Naive thymus-derived CD4-positive, alpha-beta T cell (primary cell): ENCODE measurements at regions of chr17 and their contacts with region 1.

Region 1: GRCh38 chr17:34420254-34420766 is 57.3 kb upstream of the CCL1 start:
- DNase-seq: peak; percentile 20 to 68 (median 50)
- ATAC-seq: peak; percentile 67
- H3K4me3 ChIP-seq: no peak overlapping the region
- H3K4me3 Mint-ChIP-seq: no peak overlapping the region
- H3K27ac ChIP-seq: no peak overlapping the region
- H3K27ac Mint-ChIP-seq: peak overlapping the region in 1 of 9 donors; percentile 31
- H3K4me1 ChIP-seq: no peaks in the 10 kb centered on the region
- H3K4me1 Mint-ChIP-seq: peaks cover 0 to 8% (median 4%) of the 10 kb centered on the region in 7 donors
- H3K27me3 ChIP-seq: no peaks in the 10 kb centered on the region
- H3K27me3 Mint-ChIP-seq: peaks cover 19 to 58% (median 40%) of the 10 kb centered on the region in 5 donors

Region 2: DNA sequence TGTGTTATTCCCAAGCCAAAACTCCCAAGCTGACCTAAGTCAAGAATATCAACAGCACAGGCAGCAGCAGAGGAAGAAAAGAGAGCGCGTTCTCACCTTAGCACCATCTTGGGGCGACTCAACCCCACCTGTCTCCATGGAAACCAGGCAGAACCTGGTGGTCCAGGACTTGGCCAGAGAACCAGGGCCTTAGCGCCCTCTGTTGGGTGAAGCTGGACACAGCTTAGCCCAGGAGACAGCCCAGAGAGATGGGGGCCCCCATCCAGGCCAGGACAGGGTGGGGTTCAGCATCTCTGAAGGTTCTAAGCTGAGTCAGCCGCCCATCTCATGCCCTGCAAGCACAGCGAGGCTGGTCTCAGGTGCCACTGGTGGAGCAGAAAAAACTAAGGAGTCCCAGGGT is 99.0 kb after region 1 on chr17:
- CTCF ChIA-PET with region 1: no interaction called
- POLR2A ChIA-PET with region 1: no interaction called
- intact Hi-C with region 1: loop called in 1 of 2 experiments (anchors 5 kb)
- DNase-seq: no peak
- ATAC-seq: no peak
- H3K4me3 ChIP-seq: no peak overlapping the region
- H3K4me3 Mint-ChIP-seq: no peak overlapping the region
- H3K27ac ChIP-seq: no peak overlapping the region
- H3K27ac Mint-ChIP-seq: no peak overlapping the region
- H3K4me1 ChIP-seq: no peaks in the 10 kb centered on the region
- H3K4me1 Mint-ChIP-seq: no peaks in the 10 kb centered on the region
- H3K27me3 ChIP-seq: no peaks in the 10 kb centered on the region
- H3K27me3 Mint-ChIP-seq: peaks cover 7 to 18% (median 15%) of the 10 kb centered on the region in 5 donors

Region 3: GRCh38 chr17:34892461-34893249 is 472.3 kb after region 1 on chr17:
- CTCF ChIA-PET with region 1: interaction called, 3 read pairs
- POLR2A ChIA-PET with region 1: no interaction called
- intact Hi-C with region 1: loop called in 1 of 2 experiments (anchors 5 kb)
- DNase-seq: peak in 6 of 9 donors; percentile 10 to 38 (median 30)
- ATAC-seq: no peak
- H3K4me3 ChIP-seq: no peak overlapping the region
- H3K4me3 Mint-ChIP-seq: no peak overlapping the region
- H3K27ac ChIP-seq: no peak overlapping the region
- H3K27ac Mint-ChIP-seq: no peak overlapping the region
- H3K4me1 ChIP-seq: no peaks in the 10 kb centered on the region
- H3K4me1 Mint-ChIP-seq: peaks cover 0 to 2% (median 0%) of the 10 kb centered on the region in 7 donors
- H3K27me3 ChIP-seq: no peaks in the 10 kb centered on the region
- H3K27me3 Mint-ChIP-seq: peaks cover 20 to 53% (median 24%) of the 10 kb centered on the region in 5 donors

Region 4: DNA sequence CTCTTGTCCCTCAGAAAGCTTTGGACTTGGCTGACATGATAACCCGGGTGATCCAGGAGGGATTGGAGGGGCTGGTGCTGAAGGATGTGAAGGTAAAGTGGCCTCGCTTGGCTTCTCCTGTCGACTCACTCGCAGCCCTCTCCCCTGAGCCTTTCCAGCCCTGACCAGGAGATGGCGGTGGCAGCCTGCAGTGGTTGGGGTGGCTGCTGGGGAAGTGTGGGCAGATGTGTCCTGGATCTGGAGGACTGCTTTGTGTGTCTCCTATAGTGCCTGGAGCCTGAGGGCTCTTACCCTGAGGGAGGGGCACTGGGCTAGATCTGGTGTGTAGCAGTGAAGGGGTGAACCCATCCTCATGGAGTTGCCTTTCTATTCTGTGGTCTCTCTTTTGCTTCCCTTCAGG is 577.9 kb after region 1 on chr17:
- CTCF ChIA-PET with region 1: no interaction called
- POLR2A ChIA-PET with region 1: no interaction called
- intact Hi-C with region 1: loop called in 1 of 2 experiments (anchors 5 kb)
- DNase-seq: peak; percentile 62 to 82 (median 76)
- ATAC-seq: peak; percentile 96
- H3K4me3 ChIP-seq: no peak overlapping the region
- H3K4me3 Mint-ChIP-seq: no peak overlapping the region
- H3K27ac ChIP-seq: no peak overlapping the region
- H3K27ac Mint-ChIP-seq: peak overlapping the region; percentile 60 to 89 (median 82)
- H3K4me1 ChIP-seq: no peaks in the 10 kb centered on the region
- H3K4me1 Mint-ChIP-seq: peaks cover 5 to 10% (median 6%) of the 10 kb centered on the region in 7 donors
- H3K27me3 ChIP-seq: no peaks in the 10 kb centered on the region
- H3K27me3 Mint-ChIP-seq: no peaks in the 10 kb centered on the region